Left lung (tissue), 14 donors: ENCODE measurements at regions of chr4 and their contacts with region 1.

Region 1: GRCh38 chr4:15488658-15489470 is 19.2 kb downstream of the CC2D2A start:
- DNase-seq: no peak
- ATAC-seq: no peak
- H3K4me3 ChIP-seq: no peak overlapping the region
- H3K27ac ChIP-seq: no peak overlapping the region
- H3K4me1 ChIP-seq: no peaks in the 10 kb centered on the region
- H3K27me3 ChIP-seq: no peaks in the 10 kb centered on the region
- CTCF ChIP-seq: no peak

Region 2: GRCh38 chr4:15655229-15656037 is 166.6 kb after region 1 on chr4 and contains the start of gene FBXL5:
- intact Hi-C with region 1: loop called in 1 of 2 experiments (anchors 10 kb)
- DNase-seq: peak; percentile 77 to 95 (median 89)
- ATAC-seq: peak; percentile 78
- H3K4me3 ChIP-seq: peak within 1 kb of the TSS; percentile 59 to 79
- H3K27ac ChIP-seq: peak within 1 kb of the TSS; percentile 99 to 100
- H3K4me1 ChIP-seq: peaks cover 32 to 88% of the 10 kb centered on the region in 2 donors
- H3K27me3 ChIP-seq: no peaks in the 10 kb centered on the region
- CTCF ChIP-seq: no peak
- polyA plus RNA-seq, gene FBXL5: 91.9 to 103 (median 101) TPM